ENCODE measurements at regions of chr6 and their contacts with region 1.

Region 1: GRCh38 chr6:7389451-7390225 is at the starts of genes CAGE1 and RIOK1:
- DNase-seq: peak; percentile 94
- H3K4me3 ChIP-seq: peak within 1 kb of the TSS; percentile 83
- H3K27ac ChIP-seq: peak within 1 kb of the TSS; percentile 84
- H3K4me1 ChIP-seq: peaks cover 21% of the 10 kb centered on the region
- CTCF ChIP-seq: no peak
- total RNA-seq, gene CAGE1: 0.44 and 1.1 TPM in 2 replicates
- total RNA-seq, gene RIOK1: 55.0 and 85.0 TPM in 2 replicates

Region 2: GRCh38 chr6:7589949-7590917 is 200.6 kb after region 1 on chr6 and contains the start of gene SNRNP48:
- CTCF ChIA-PET with region 1: no interaction called
- POLR2A ChIA-PET with region 1: no interaction called
- intact Hi-C with region 1: loop called (anchors 1 kb)
- DNase-seq: peak; percentile 95
- H3K4me3 ChIP-seq: peak within 1 kb of the TSS; percentile 88
- H3K27ac ChIP-seq: peak within 1 kb of the TSS; percentile 28
- H3K4me1 ChIP-seq: peaks cover 20% of the 10 kb centered on the region
- CTCF ChIP-seq: no peak
- total RNA-seq, gene SNRNP48: 19.8 and 24.1 TPM in 2 replicates

Region 3: GRCh38 chr6:8277769-8278168 is 888.1 kb after region 1 on chr6:
- CTCF ChIA-PET with region 1: no interaction called
- POLR2A ChIA-PET with region 1: no interaction called
- intact Hi-C with region 1: no loop called
- DNase-seq: no peak
- H3K4me3 ChIP-seq: no peak overlapping the region
- H3K27ac ChIP-seq: no peak overlapping the region
- H3K4me1 ChIP-seq: no peaks in the 10 kb centered on the region
- CTCF ChIP-seq: no peak

Measured in OCI-LY7 (cell line).